Endothelial cell of umbilical vein (primary cell): ENCODE measurements at regions of chr20 and their contacts with region 1.

Region 1: DNA sequence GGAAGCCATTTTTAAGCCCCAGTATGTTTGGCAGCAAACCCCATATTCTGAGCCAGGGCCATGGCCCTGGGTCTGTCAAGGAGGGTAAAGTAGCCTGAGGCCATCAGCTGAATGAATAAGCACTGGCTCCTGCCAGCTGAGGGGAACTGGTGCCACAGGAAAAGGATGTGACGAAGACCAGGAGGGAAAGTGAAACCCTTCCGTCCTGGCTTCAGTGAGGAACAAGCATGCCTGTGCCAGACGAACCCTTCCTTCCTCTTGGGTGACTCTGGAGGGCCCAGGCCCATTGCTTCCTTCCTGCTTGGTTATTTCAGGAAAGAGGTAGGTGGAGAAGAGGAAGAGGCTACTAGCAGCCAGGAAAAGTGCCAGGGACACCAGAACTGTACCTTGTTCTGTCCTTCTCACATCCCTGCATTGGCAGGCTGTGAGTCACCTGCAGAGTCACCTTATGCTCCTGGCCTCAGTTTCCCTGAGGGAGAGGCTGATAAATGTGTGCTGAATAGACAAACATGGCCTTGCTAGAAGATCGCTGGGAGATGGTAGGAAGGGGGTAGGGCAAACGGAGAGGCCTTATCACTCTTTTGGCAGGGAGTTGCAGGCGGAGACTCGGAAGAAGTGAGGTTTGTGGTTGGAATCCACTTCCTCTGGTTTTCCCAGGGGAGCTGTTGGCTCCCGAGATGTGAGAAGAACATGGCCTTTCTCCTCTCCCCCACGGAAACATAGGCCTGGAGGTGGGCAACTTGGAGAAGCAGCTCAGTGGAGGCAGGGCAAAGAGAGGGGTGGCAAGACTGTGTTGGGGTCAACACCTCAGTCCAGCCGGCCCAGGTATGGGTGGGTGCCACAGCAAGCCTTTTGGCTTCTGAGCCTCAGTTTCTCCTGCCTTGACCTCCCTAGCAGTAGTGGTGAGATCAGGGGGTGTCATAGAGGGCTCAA is 37.4 kb downstream of the COX4I2 start:
- DNase-seq: peak; percentile 84
- H3K4me3 ChIP-seq: peak overlapping the region in 1 of 3 experiments; percentile 20
- H3K27ac ChIP-seq: peak overlapping the region; percentile 93
- H3K4me1 ChIP-seq: peaks cover 60% of the 10 kb centered on the region
- H3K27me3 ChIP-seq: no peaks in the 10 kb centered on the region
- CTCF ChIP-seq: no peak
- POLR2A ChIP-seq: peak; percentile 27

Region 2: GRCh38 chr20:31514159-31515071 is 160.7 kb before region 1 on chr20 and contains the start of gene HM13:
- CTCF ChIA-PET with region 1: no interaction called
- POLR2A ChIA-PET with region 1: no interaction called
- dilution Hi-C with region 1: no loop called
- intact Hi-C with region 1: no loop called
- DNase-seq: peak; percentile 94
- H3K4me3 ChIP-seq: peak within 1 kb of the TSS; percentile 7 to 84 (median 70)
- H3K27ac ChIP-seq: peak within 1 kb of the TSS; percentile 38
- H3K4me1 ChIP-seq: peaks cover 25% of the 10 kb centered on the region
- H3K27me3 ChIP-seq: no peaks in the 10 kb centered on the region
- CTCF ChIP-seq: peak; percentile 94 to 99
- POLR2A ChIP-seq: peak; percentile 95
- total RNA-seq, gene HM13: 188 and 211 TPM in 2 replicates

Region 3: GRCh38 chr20:31698803-31699718 is 23.9 kb after region 1 on chr20:
- CTCF ChIA-PET with region 1: interaction called, 10 read pairs
- POLR2A ChIA-PET with region 1: interaction called, 3 read pairs
- dilution Hi-C with region 1: no loop called
- intact Hi-C with region 1: loop called (anchors 1 kb)
- DNase-seq: peak; percentile 96
- H3K4me3 ChIP-seq: no peak overlapping the region
- H3K27ac ChIP-seq: peak overlapping the region; percentile 86
- H3K4me1 ChIP-seq: peaks cover 52% of the 10 kb centered on the region
- H3K27me3 ChIP-seq: no peaks in the 10 kb centered on the region
- CTCF ChIP-seq: no peak
- POLR2A ChIP-seq: peak; percentile 42

Region 4: GRCh38 chr20:31704225-31705119 is 29.3 kb after region 1 on chr20:
- CTCF ChIA-PET with region 1: interaction called, 10 read pairs
- POLR2A ChIA-PET with region 1: interaction called, 3 read pairs
- dilution Hi-C with region 1: no loop called
- intact Hi-C with region 1: loop called (anchors 1 kb)
- DNase-seq: peak; percentile 54
- H3K4me3 ChIP-seq: no peak overlapping the region
- H3K27ac ChIP-seq: peak overlapping the region; percentile 77
- H3K4me1 ChIP-seq: peaks cover 30% of the 10 kb centered on the region
- H3K27me3 ChIP-seq: no peaks in the 10 kb centered on the region
- CTCF ChIP-seq: no peak
- POLR2A ChIP-seq: no peak